HEK293T (cell line): ENCODE measurements at regions of chr1 and their contacts with region 1.

Region 1: DNA sequence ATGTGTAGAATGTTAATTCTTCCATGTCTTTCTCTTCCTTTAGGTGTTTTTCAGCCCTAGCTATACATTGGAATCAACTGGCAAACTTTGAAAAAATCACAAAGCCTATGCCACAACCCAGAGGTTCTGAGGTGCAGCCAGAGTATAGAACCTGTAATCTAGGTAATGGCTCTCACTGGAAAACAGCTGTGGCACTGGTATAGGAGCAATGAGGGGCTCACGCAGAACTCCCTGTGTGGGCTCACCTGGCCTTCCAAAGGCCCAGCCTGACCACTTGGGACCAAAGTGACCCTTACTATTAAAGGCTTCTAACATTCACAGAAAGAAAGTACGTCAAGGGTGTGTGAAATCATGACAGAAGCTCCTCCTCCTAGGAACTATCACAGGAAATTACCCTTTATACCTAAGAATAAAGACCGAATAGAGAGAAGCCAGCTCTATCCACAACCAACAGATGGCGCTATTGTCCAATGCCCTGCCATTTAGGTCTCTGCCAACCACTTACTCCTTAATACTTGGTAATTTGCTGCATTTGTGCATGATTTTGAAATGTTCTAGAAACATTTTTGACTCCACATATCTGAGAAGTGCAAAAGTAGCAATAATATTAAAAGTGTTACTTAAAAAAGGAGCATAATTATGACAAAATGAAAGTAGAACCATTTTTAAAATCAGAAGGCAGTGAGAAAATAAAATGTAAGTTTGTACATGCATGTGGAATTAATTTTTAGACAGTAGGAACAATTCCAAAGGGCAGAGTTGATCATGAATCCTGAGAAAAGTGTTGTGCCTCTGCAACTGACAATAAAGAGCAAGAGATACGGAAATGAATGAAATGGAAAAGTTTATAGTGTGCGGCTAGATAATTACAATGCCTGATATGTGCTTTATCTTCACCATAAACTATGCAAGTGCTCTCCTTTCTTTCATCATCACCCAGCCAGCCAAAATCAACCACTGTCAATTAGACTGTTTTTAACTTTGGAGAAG is 93.1 kb upstream of the HAO2 start:
- DNase-seq: peak; percentile 71

Region 2: GRCh38 chr1:119254067-119254720 is 21.2 kb before region 1 on chr1:
- CTCF ChIA-PET with region 1: no interaction called
- POLR2A ChIA-PET with region 1: no interaction called
- DNase-seq: no peak

Region 3: DNA sequence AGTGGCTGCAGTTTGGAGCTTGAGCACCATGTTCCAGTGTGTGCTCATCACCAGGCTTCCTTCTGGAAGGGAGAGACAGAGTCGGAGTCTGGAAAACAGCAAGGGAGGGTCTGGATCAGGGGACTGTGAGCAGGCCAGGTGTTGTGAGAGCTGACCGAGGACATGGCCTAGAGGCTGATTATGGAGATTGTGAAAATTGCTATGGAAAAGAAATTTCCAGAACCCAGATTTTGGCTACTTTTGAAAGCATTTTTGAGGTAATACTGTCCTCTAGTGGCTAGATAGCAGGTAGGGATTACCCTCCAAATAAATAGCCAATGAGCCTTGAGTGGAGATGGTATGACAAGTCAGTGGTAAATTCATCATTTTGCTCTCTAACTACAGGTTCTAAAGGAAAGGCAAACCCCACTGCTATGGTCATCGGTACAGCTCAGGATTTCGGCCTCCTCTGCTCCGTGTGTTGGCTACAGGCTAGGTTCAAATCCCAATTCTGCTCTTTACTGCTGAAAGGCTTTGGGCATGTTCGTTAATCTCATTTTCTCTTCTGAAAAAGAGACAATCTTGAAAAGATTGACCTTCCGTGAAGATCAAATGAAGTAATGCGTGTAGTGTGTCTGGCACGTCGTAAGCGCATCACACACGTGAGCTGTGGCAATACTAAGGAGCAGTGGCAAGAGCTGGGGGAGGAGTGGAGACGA is 92.1 kb after region 1 on chr1:
- CTCF ChIA-PET with region 1: interaction called, 11 read pairs
- POLR2A ChIA-PET with region 1: no interaction called
- DNase-seq: peak; percentile 63

Region 4: DNA sequence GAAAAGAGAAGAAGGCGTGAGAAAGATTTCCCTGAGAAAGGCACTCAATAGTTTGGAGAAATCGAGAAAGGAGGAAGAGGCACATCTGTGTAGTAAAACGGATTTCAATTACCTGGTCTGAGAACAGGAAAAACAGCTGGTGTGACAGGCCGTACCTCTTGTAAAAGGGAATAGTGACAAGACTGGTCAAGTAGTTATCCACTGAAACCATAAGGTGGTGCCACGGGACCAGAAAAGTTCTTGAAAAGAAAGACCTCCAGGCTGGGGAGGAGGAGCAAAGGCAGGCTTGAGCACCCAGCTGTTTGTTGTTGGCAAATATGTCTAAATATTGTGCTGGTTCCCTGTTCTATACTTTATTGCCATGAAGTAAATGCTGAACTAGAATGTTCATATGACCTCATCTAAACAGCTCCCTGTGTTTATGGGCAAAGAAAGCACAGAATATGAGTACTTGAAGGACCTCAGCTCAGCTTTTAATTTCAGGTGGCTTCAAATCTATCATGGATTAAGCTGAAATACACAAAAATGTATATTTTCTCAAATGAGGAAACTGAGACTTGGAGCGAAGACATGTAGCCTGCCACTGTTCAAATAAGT is 97.1 kb after region 1 on chr1:
- CTCF ChIA-PET with region 1: interaction called, 11 read pairs
- POLR2A ChIA-PET with region 1: no interaction called
- DNase-seq: peak; percentile 74

Region 5: DNA sequence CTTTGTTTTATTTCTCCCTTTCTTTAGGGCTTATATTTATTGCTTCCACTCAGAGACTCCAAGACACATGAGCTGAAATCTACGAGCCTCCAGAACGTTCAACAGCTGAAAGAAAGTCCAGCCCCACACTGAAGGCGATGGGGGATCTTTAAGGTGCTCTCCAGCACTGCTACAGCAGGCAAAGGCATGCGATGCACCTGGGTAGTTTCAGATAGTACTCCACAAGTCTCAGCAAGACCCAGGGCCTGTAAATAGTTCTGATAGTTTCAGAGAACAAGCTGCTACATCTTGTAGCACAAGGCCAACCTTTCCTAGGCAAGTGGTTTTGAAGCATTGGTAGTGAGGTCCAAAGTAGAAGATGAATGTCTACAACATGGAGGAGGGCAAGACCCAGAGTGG is 229.4 kb after region 1 on chr1:
- CTCF ChIA-PET with region 1: no interaction called
- POLR2A ChIA-PET with region 1: no interaction called
- DNase-seq: no peak

Region 6: DNA sequence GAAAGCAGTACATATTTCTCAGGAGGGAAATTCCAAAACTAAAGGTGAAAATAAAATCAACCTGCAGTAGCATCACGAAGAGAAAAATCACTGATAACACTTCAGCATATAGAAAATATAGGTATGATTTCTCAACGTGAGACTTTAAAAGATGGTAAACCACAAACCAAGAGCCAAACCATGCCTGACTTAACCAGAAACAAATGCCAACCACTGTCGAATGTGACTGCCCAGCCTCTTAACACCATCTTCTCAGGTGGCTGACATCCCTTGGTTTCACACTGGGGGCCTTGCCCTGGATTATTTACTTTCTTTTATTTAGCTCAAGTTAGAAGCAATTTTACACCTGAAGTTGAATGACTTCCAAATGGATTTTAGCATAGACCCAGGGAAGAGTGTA is 483.1 kb after region 1 on chr1:
- CTCF ChIA-PET with region 1: no interaction called
- POLR2A ChIA-PET with region 1: no interaction called
- DNase-seq: no peak